ENCODE measurements at regions of chr5 and their contacts with region 1.

Region 1: GRCh38 chr5:157328277-157328912 is 62.5 kb downstream of the CYFIP2 start:
- DNase-seq: peak in 8 of 10 donors; percentile 46 to 75 (median 67)
- H3K4me3 ChIP-seq: peak overlapping the region in 22 of 59 donors; percentile 1 to 44 (median 28)
- H3K27ac ChIP-seq: peak overlapping the region in 16 of 59 donors; percentile 0 to 60 (median 18)
- H3K27me3 ChIP-seq: no peaks in the 10 kb centered on the region
- CTCF ChIP-seq: peak; percentile 66 to 98 (median 89)

Region 2: DNA sequence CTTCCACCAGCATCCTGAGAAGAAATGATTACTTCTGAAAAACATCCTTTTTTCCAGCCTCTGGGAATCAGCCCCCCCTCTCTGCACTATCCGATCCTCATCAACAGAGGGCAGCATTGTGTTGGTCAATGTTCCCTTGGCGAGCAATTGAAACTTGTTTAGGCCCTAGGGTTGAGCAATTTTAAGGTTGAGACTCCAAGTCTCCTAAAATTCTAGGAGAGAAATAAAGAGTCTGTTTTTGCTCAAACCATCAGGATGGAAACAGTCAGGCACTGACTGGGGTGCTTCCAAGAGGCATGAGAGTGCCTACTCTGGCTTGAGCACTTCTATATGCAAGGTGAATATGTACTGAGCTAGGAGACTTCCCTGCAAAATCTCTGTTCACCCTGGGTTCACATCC is 74.8 kb before region 1 on chr5:
- intact Hi-C with region 1: loop called in 1 of 2 experiments (anchors 5 kb)
- DNase-seq: peak in 6 of 10 donors; percentile 39 to 69 (median 52)
- H3K4me3 ChIP-seq: peak overlapping the region in 1 of 59 donors; percentile 3
- H3K27ac ChIP-seq: peak overlapping the region in 2 of 59 donors; percentile 24 to 35
- H3K27me3 ChIP-seq: no peaks in the 10 kb centered on the region
- CTCF ChIP-seq: peak; percentile 57 to 93 (median 86)

Region 3: GRCh38 chr5:157431544-157432200 is 103.3 kb after region 1 on chr5:
- intact Hi-C with region 1: loop called in 1 of 2 experiments (anchors 5 kb)
- DNase-seq: peak in 2 of 10 donors; percentile 24 to 32
- H3K4me3 ChIP-seq: peak overlapping the region in 3 of 59 donors; percentile 11 to 40 (median 23)
- H3K27ac ChIP-seq: peak overlapping the region in 29 of 59 donors; percentile 2 to 72 (median 44)
- H3K27me3 ChIP-seq: no peaks in the 10 kb centered on the region
- CTCF ChIP-seq: peak; percentile 46 to 90 (median 72)